ENCODE measurements at regions of chr2 and their contacts with region 1.

Region 1: DNA sequence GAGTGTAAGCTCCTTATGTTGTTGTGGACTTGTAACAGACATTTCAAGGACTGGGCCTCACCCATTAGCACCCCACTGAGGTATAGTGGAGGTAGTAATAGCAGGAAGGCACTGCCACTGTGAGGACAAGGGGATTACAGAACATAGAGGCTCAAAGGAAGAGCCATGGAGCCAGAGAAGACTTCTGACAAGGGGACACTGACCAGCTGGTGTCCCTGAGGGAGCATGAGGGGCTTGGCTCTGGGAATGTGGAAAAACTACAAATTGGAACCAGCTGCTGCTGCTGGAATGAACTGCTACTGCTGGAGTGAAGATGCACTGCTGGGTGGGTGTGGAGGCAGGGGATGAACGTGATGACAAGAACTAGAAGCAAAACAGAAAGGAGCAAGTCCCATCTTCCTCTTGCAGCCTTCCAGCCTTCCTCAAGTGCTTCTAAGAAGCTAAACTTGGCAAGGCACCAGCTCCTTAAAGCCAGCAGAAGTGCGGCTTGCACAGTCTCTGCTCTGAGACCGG is 167.3 kb upstream of the NOSTRIN start:
- DNase-seq: peak; percentile 93
- H3K4me3 ChIP-seq: no peak overlapping the region
- H3K27ac ChIP-seq: peak overlapping the region; percentile 62 to 84 (median 70)
- H3K4me1 ChIP-seq: peaks cover 0 to 66% (median 57%) of the 10 kb centered on the region in 4 donors
- H3K27me3 ChIP-seq: no peaks in the 10 kb centered on the region
- CTCF ChIP-seq: no peak
- EP300 ChIP-seq: peak in 2 of 4 donors; percentile 14 to 22
- POLR2A ChIP-seq: no peak

Region 2: GRCh38 chr2:168455648-168456520 is 179.2 kb before region 1 on chr2 and contains the start of gene CERS6:
- intact Hi-C with region 1: loop called (anchors 5 kb)
- DNase-seq: peak; percentile 98
- H3K4me3 ChIP-seq: peak within 1 kb of the TSS; percentile 75 to 92 (median 80)
- H3K27ac ChIP-seq: peak within 1 kb of the TSS; percentile 68 to 86 (median 72)
- H3K4me1 ChIP-seq: peaks cover 0 to 5% (median 0%) of the 10 kb centered on the region in 4 donors
- H3K27me3 ChIP-seq: no peaks in the 10 kb centered on the region
- CTCF ChIP-seq: no peak
- EP300 ChIP-seq: no peak
- POLR2A ChIP-seq: peak in 1 of 2 donors; percentile 64
- total RNA-seq, gene CERS6: 9.4 to 15.3 (median 12.3) TPM

Region 3: DNA sequence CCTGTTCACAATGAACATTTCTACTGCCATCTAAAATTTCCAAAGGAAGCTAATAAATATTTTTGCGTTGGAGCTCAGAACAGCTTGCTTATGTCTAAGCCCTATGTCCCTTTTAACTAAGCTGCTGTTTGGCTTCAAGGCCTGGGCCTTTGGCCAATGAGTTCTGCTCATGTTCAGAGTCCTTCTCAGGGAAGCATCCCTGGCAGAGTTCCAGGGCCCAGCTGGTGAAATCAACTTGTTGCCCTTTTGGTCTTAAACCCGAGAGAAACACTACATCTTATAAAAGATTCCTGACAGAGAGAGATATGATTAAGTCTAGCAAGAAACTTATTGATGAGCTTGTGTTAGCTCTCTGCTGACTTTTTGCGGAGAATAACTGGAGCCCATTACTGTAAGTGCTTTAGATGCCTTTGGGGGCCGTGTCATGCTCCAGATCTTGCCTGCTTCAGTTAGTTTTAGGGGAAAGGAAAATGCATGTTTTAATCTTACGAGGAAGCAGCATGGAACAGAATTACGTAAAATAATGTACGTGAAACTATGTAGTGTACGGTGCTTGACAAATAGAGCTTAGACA is 64.8 kb after region 1 on chr2:
- intact Hi-C with region 1: loop called (anchors 5 kb)
- DNase-seq: peak; percentile 97
- H3K4me3 ChIP-seq: no peak overlapping the region
- H3K27ac ChIP-seq: peak overlapping the region; percentile 45 to 71 (median 49)
- H3K4me1 ChIP-seq: peaks cover 0 to 34% (median 22%) of the 10 kb centered on the region in 4 donors
- H3K27me3 ChIP-seq: no peaks in the 10 kb centered on the region
- CTCF ChIP-seq: no peak
- EP300 ChIP-seq: peak in 3 of 4 donors; percentile 31 to 77 (median 48)
- POLR2A ChIP-seq: no peak

Measured in sigmoid colon (tissue), 7 donors.